ENCODE measurements at regions of chr5 and their contacts with region 1.

Region 1: DNA sequence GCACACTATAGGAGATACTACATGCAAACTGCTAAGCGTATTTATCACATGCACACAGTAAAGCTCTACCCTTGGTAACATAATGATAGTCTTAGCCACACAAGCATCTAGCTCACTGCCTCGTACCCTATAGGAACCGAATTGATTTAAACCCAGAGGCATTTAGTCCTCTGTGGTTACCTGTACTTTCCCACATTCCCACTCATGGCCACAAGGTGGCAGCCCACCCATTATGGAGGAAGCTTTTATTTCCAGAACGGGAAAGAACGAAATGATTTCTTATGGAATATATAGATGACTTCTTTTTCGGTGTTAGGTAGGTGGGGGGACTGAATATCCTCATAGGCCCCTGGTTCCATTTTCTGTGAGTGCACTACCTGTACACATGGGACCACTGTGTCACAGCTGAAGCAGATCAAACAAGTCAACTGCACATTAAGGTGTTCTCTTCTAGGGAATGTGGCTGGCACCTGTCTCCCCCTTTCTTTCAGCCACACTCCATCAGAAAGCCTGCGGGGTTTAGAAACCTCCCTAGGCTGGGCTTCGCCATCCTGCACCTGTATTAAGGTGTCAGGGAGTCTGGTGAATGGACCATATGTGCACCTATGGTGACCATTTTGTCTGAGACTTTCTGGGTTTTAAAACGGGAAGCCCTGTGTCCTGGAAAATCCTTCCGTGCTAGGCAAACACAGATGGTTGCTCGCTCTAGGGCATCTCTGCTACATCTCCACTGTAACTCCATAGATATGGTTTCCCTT is 313.2 kb downstream of the SLIT3 start:
- DNase-seq: peak; percentile 82
- H3K4me3 Mint-ChIP-seq: no peak overlapping the region
- H3K27ac Mint-ChIP-seq: no peak overlapping the region
- H3K4me1 Mint-ChIP-seq: no peaks in the 10 kb centered on the region
- H3K27me3 Mint-ChIP-seq: peaks cover 54% of the 10 kb centered on the region
- CTCF ChIP-seq: peak; percentile 48

Region 2: DNA sequence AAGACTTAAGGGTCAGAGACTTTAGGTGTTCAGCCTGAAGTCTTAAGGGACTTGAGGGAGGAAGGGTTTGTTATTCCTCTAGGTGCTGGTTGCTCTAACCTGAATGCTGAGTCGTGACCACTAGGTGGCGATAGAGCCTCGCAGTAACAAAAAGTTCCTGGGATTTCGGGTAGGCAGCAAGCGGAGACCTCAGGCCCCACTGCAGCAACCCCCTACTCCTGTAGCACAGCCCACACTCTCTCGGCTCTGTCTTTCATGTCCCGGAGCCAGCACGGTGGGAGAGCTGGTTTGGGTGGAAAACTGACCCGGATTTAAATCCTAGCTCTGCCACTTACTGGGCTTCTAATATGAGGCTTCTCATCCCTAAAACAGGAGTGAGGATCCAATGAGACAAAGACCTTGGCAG is 308.2 kb before region 1 on chr5:
- CTCF ChIA-PET with region 1: no interaction called
- intact Hi-C with region 1: loop called (anchors 1 kb)
- DNase-seq: peak; percentile 79
- H3K4me3 Mint-ChIP-seq: no peak overlapping the region
- H3K27ac Mint-ChIP-seq: no peak overlapping the region
- H3K4me1 Mint-ChIP-seq: no peaks in the 10 kb centered on the region
- H3K27me3 Mint-ChIP-seq: peaks cover 13% of the 10 kb centered on the region
- CTCF ChIP-seq: peak; percentile 96

Region 3: DNA sequence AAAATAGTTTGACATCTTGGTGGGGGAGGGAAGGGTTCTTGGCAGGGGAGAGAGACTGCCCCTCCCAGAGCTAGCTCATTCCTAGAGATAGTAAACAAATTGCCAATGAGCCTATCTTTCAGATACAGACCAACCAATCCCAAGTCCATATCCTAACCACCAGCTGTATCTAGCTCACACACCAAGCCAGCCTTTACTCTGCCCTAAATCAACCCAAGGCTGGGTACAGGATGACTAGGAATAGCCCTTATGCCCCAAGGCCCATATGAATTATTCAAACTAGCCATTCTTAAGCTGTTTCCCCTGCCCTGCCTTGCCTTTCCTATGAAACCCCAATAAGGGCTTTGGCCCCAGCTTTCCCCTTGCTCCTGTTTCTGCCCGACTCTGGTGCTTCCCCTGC is 127.2 kb before region 1 on chr5:
- CTCF ChIA-PET with region 1: no interaction called
- intact Hi-C with region 1: no loop called
- DNase-seq: no peak
- H3K4me3 Mint-ChIP-seq: no peak overlapping the region
- H3K27ac Mint-ChIP-seq: no peak overlapping the region
- H3K4me1 Mint-ChIP-seq: no peaks in the 10 kb centered on the region
- H3K27me3 Mint-ChIP-seq: peaks cover 52% of the 10 kb centered on the region
- CTCF ChIP-seq: no peak

Region 4: GRCh38 chr5:169149317-169149716 is 161.6 kb after region 1 on chr5:
- CTCF ChIA-PET with region 1: no interaction called
- intact Hi-C with region 1: loop called (anchors 2 kb)
- DNase-seq: no peak
- H3K4me3 Mint-ChIP-seq: no peak overlapping the region
- H3K27ac Mint-ChIP-seq: no peak overlapping the region
- H3K4me1 Mint-ChIP-seq: no peaks in the 10 kb centered on the region
- H3K27me3 Mint-ChIP-seq: peaks cover 33% of the 10 kb centered on the region
- CTCF ChIP-seq: no peak

Region 5: GRCh38 chr5:169302491-169303118 is 314.9 kb after region 1 on chr5:
- CTCF ChIA-PET with region 1: interaction called, 4 read pairs
- intact Hi-C with region 1: loop called (anchors 1 kb)
- DNase-seq: peak; percentile 81
- H3K4me3 Mint-ChIP-seq: no peak overlapping the region
- H3K27ac Mint-ChIP-seq: no peak overlapping the region
- H3K4me1 Mint-ChIP-seq: no peaks in the 10 kb centered on the region
- H3K27me3 Mint-ChIP-seq: peaks cover 37% of the 10 kb centered on the region
- CTCF ChIP-seq: peak; percentile 70

Region 6: DNA sequence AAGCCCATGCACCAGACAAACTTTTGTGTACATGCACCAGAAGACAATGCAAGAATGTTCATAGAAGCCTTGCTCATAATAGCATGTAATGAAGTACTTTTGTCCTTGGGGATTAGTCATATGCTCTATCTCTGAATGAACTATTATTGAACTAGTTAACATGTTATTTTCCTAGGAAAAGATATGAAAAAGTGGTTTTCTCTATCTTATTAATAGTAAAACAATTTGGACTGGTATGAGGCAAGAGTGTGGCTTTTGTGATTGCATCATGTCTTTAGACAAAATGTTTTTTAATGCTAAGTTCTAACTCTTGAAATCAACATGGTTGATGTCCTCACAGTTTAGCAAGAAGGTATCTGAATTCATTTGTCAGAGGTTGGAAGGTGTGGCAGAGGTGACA is 540.1 kb after region 1 on chr5:
- CTCF ChIA-PET with region 1: no interaction called
- intact Hi-C with region 1: no loop called
- DNase-seq: no peak
- H3K4me3 Mint-ChIP-seq: no peak overlapping the region
- H3K27ac Mint-ChIP-seq: no peak overlapping the region
- H3K4me1 Mint-ChIP-seq: no peaks in the 10 kb centered on the region
- H3K27me3 Mint-ChIP-seq: no peaks in the 10 kb centered on the region
- CTCF ChIP-seq: no peak

Region 7: DNA sequence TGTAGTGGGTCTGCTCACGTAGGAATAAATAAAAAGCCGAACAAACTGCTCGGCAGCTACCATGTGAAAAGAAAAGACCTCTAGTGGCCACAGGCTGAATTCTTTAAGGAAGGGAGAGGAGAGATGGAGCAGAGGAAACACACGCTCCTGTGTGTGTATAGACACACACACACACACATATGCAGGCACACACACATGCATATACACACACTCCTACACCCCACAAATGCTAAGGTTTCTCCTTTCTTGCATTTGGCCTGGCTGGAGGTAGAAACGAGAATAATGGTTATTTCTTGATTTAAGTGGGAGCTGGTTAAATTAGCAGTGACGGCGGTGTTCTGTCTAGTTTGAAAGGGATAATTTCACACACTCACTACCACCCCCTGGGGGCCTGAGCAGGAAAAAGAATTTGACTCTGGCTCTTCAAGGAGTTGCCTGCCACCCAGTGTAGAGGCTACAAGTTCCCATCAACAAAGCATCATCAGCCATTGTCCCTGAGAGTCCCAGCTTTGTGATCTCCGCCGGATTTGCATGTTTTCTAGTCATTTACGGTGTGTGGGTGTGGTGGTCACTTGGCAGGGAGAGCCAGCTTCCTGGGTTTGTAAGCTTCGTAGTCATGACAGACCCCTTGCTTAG is 992.8 kb after region 1 on chr5 and contains the start of gene INSYN2B:
- CTCF ChIA-PET with region 1: no interaction called
- intact Hi-C with region 1: loop called (anchors 5 kb)
- DNase-seq: peak; percentile 71
- H3K4me3 Mint-ChIP-seq: no peak within 1 kb of the TSS
- H3K27ac Mint-ChIP-seq: no peak within 1 kb of the TSS
- H3K4me1 Mint-ChIP-seq: no peaks in the 10 kb centered on the region
- H3K27me3 Mint-ChIP-seq: peaks cover 90% of the 10 kb centered on the region
- CTCF ChIP-seq: peak; percentile 50
- total RNA-seq, gene INSYN2B: not detected in 2 replicates

Measured in Calu3 (cell line).